Mammary epithelial cell (primary cell): ENCODE measurements at regions of chr19 and their contacts with region 1.

Region 1: GRCh38 chr19:38544034-38544958 is 73.5 kb downstream of the MAP4K1 start:
- DNase-seq: peak; percentile 93
- H3K4me3 ChIP-seq: peak overlapping the region in 2 of 3 experiments; percentile 10 to 27
- H3K27ac ChIP-seq: peak overlapping the region; percentile 45
- H3K4me1 ChIP-seq: peaks cover 16% of the 10 kb centered on the region
- H3K27me3 ChIP-seq: no peaks in the 10 kb centered on the region
- CTCF ChIP-seq: peak; percentile 69 to 73

Region 2: GRCh38 chr19:38355728-38356725 is 188.3 kb before region 1 on chr19:
- CTCF ChIA-PET with region 1: no interaction called
- dilution Hi-C with region 1: no loop called
- in situ Hi-C with region 1: no loop called
- intact Hi-C with region 1: no loop called
- DNase-seq: no peak
- H3K4me3 ChIP-seq: no peak overlapping the region
- H3K27ac ChIP-seq: no peak overlapping the region
- H3K4me1 ChIP-seq: peaks cover 1% of the 10 kb centered on the region
- H3K27me3 ChIP-seq: peaks cover 14% of the 10 kb centered on the region
- CTCF ChIP-seq: no peak

Region 3: DNA sequence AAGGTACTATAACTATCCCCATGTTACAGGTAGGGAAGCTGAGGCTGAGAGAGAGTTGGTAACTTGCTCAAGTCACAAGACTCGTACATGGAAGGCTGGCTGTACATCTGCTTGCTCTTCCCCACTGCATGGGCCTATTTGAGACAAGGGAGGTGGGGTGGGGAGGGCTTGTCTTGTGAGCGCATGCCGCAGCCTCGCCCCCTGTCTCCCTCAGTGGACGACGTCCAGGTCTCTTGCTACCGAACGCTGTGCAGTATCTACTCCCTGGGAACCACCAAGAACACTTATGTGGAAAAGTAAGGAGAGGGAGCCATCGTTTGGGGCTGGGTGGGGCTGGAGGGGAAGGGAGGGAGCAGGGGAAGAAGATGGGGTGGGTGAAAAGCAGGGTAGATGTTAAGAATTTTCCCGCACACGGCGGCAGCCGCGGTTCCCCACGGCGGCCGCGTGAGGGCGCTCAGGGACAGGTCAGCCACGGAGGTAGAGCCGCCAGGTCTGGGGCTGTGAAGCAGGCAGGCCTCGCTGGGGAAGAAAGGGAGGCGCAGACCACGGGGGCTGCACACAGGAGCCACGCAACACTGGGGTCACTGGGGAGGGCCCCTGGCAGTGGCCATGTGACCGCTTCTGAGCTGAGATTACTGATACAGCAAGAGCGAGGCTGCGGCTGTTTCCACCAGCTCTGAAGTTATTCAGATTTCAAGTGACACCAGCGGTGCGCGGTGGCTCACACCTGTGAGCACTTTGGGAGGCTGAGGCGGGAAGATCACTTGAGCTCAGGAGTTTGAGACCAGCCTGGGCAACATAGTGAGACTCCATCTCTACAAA is 29.3 kb before region 1 on chr19:
- CTCF ChIA-PET with region 1: no interaction called
- dilution Hi-C with region 1: no loop called
- in situ Hi-C with region 1: no loop called
- intact Hi-C with region 1: loop called (anchors 2 kb)
- DNase-seq: peak; percentile 45
- H3K4me3 ChIP-seq: peak overlapping the region in 1 of 3 experiments; percentile 4
- H3K27ac ChIP-seq: no peak overlapping the region
- H3K4me1 ChIP-seq: no peaks in the 10 kb centered on the region
- H3K27me3 ChIP-seq: no peaks in the 10 kb centered on the region
- CTCF ChIP-seq: peak; percentile 62 to 90

Region 4: GRCh38 chr19:38626401-38626800 is 82.1 kb after region 1 on chr19:
- CTCF ChIA-PET with region 1: no interaction called
- dilution Hi-C with region 1: no loop called
- in situ Hi-C with region 1: loop called in 1 of 2 experiments (anchors 5 kb)
- intact Hi-C with region 1: no loop called
- DNase-seq: no peak
- H3K4me3 ChIP-seq: no peak overlapping the region
- H3K27ac ChIP-seq: no peak overlapping the region
- H3K4me1 ChIP-seq: no peaks in the 10 kb centered on the region
- H3K27me3 ChIP-seq: no peaks in the 10 kb centered on the region
- CTCF ChIP-seq: no peak

Region 5: GRCh38 chr19:38701455-38702063 is 157.3 kb after region 1 on chr19:
- CTCF ChIA-PET with region 1: no interaction called
- dilution Hi-C with region 1: loop called (anchors 5 kb)
- in situ Hi-C with region 1: no loop called
- intact Hi-C with region 1: loop called (anchors 2 kb)
- DNase-seq: no peak
- H3K4me3 ChIP-seq: no peak overlapping the region
- H3K27ac ChIP-seq: no peak overlapping the region
- H3K4me1 ChIP-seq: peaks cover 50% of the 10 kb centered on the region
- H3K27me3 ChIP-seq: no peaks in the 10 kb centered on the region
- CTCF ChIP-seq: no peak

Region 6: DNA sequence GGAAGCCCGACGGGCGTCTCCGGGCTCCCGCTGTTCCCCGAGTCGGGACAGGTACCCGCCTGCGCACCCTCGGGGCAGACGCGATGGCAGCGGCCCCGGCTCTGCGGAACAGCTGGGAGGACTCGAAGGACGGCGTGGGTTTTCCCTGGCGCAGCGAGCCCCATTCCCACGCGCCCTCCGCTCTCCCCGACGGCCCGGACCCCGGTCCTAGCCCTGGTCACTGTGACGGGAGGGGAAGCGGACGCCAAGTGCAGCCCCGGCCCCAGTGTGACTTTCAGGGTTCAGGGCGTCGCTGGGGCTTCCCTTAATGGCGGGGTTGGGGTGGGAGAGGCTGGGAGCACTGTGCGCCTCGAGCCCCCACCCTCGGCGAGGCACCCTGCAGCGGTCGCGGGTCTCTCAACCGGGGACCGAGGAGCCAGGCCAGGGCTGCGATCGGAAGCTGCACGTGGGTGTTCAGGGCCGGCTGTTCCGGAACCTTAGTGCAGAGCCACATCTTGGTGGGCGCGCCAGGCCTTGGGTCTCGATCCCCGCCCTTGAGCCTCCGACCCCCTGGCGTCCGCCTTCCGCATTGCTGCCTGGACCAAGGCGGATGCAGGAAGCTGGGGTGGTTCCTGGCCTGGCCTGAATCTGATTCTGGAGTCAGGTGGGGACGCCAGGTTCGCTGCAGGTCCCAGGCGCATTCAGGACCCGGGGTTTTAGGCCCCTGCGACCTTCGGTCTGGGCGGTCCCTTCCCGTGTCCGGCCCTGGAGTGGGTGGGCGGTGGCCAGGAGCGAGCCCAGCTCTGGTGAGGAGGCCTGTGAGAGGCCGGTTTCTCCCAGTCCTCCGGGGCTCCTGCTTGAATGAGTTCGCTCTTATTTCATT is 248.2 kb after region 1 on chr19:
- CTCF ChIA-PET with region 1: no interaction called
- dilution Hi-C with region 1: loop called (anchors 25 kb)
- in situ Hi-C with region 1: no loop called
- intact Hi-C with region 1: no loop called
- DNase-seq: no peak
- H3K4me3 ChIP-seq: peak overlapping the region in 1 of 3 experiments; percentile 4
- H3K27ac ChIP-seq: peak overlapping the region; percentile 68
- H3K4me1 ChIP-seq: peaks cover 27% of the 10 kb centered on the region
- H3K27me3 ChIP-seq: no peaks in the 10 kb centered on the region
- CTCF ChIP-seq: peak; percentile 29 to 50

Region 7: DNA sequence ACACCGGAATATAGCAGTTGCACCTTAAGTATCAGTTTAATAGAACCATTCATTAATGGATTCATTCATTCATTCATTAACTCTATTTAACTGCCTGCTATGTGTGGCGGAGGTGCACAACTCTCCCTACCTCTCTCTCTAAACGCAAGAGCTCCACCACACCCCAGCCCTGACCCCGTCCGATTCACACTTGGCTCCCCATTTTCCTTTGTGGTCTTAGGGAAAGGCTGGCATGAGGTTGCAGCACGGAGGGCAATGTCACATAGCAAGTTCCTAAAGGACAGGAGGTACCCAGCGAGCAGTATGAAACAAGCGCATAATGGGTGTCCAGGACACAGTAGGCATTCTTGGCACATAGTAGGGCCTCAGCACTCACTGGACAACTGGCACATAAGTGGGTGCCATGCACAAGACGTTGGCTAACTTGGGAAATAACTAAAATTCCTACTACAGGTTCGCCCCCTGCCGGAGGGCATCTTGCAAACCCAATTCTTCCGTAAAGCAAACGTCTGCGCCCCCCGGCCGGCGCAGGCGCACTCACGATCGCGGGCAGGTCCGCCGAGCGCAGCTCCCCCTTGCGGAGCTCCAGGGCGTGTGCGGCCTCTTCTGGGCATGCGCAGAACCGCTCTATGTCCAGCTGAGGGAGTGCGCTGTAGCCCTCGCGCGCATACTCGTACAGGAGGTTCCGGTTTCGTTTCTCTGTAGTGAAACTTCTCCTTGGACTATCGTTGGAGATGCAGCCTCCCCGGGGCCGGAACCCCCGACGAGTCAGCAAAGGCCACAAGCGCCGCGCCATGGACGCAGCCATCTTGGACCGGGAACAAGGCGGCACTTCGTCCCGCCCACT is 385.9 kb after region 1 on chr19 and contains the start of gene SARS2:
- CTCF ChIA-PET with region 1: no interaction called
- dilution Hi-C with region 1: no loop called
- in situ Hi-C with region 1: no loop called
- intact Hi-C with region 1: loop called (anchors 1 kb)
- DNase-seq: peak; percentile 84
- H3K4me3 ChIP-seq: peak within 1 kb of the TSS; percentile 84 to 90 (median 86)
- H3K27ac ChIP-seq: peak within 1 kb of the TSS; percentile 82
- H3K4me1 ChIP-seq: peaks cover 12% of the 10 kb centered on the region
- H3K27me3 ChIP-seq: no peaks in the 10 kb centered on the region
- CTCF ChIP-seq: peak; percentile 88 to 96
- total RNA-seq, gene SARS2: 18.0 to 28.0 TPM